ENCODE measurements at regions of chr1 and their contacts with region 1.

Region 1: GRCh38 chr1:59249396-59250137 is 47.3 kb upstream of the FGGY start:
- DNase-seq: no peak

Region 2: GRCh38 chr1:58380345-58380744 is 869.2 kb before region 1 on chr1:
- intact Hi-C with region 1: no loop called
- DNase-seq: no peak

Region 3: DNA sequence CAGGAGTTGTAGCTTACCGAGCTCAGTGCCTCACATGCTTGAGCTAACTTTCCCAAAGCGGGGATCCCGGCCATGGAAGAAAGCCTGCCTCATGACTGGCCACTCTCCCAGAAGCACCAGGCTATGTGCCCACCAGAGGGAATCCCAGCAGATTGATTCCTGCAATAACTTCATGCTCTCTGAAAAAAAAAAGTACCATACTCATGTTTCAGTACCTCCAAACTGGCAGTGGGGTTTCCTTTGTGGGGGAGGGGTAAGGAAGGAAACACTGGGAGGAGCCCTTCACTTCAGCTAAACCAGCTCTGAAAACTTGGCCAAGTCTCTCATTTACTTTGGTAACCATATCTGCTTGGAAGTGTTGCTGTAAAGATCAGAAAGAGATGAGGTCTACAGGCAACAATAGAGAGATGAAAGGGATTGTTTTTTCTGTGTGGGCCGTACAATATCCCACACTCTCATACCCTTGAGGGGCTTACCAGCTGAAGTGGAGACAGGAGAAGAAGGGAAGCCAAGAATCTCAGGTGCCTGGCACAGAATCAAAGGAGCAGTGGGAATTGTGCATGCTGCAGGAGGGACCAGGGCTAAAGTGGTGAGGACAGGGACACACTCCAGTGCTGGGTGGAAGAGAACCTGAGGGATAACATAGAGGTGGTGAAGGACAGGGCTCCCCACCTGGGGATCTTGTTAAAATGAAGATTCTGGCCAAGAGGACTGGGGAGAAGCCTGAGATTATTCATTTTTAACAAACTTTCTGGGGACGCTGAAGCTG is 630.1 kb before region 1 on chr1:
- intact Hi-C with region 1: loop called in 1 of 2 experiments (anchors 5 kb)
- DNase-seq: no peak

Region 4: GRCh38 chr1:59477286-59477685 is 227.7 kb after region 1 on chr1:
- intact Hi-C with region 1: no loop called
- DNase-seq: no peak

Region 5: DNA sequence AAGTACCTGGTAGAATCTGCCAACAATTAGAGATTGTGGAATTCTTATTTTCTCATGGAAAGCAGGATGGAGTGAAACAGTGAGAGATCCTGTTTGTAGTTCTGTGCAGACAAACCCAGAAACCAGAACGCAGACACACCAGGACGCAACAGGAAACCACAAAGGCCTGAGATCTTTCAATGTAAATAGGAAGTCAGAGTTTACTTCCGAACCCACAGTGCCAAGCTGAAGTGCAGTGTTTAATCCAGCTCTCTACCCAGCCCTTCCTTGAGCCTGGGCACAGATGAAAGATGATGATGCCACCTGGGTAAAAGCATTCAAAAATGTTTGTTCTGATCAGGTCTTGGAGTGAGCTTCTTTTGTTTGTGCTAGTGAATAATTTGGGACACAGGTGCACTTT is 321.0 kb after region 1 on chr1:
- intact Hi-C with region 1: no loop called
- DNase-seq: no peak